MCF 10A (cell line): ENCODE measurements at regions of chr15 and their contacts with region 1.

Region 1: GRCh38 chr15:96066852-96067490 is 263.5 kb upstream of the NR2F2 start:
- DNase-seq: no peak
- H3K4me3 Mint-ChIP-seq: no peak overlapping the region
- H3K27ac Mint-ChIP-seq: no peak overlapping the region
- H3K4me1 Mint-ChIP-seq: no peaks in the 10 kb centered on the region
- H3K27me3 Mint-ChIP-seq: no peaks in the 10 kb centered on the region
- CTCF ChIP-seq: no peak

Region 2: GRCh38 chr15:96079041-96079440 is 12.1 kb after region 1 on chr15:
- CTCF ChIA-PET with region 1: no interaction called
- POLR2A ChIA-PET with region 1: no interaction called
- intact Hi-C with region 1: no loop called
- DNase-seq: no peak
- H3K4me3 Mint-ChIP-seq: no peak overlapping the region
- H3K27ac Mint-ChIP-seq: no peak overlapping the region
- H3K4me1 Mint-ChIP-seq: no peaks in the 10 kb centered on the region
- H3K27me3 Mint-ChIP-seq: no peaks in the 10 kb centered on the region
- CTCF ChIP-seq: no peak

Region 3: GRCh38 chr15:96102631-96103030 is 35.7 kb after region 1 on chr15:
- CTCF ChIA-PET with region 1: no interaction called
- POLR2A ChIA-PET with region 1: no interaction called
- intact Hi-C with region 1: loop called (anchors 1 kb)
- DNase-seq: no peak
- H3K4me3 Mint-ChIP-seq: no peak overlapping the region
- H3K27ac Mint-ChIP-seq: no peak overlapping the region
- H3K4me1 Mint-ChIP-seq: no peaks in the 10 kb centered on the region
- H3K27me3 Mint-ChIP-seq: no peaks in the 10 kb centered on the region
- CTCF ChIP-seq: no peak